ENCODE measurements at regions of chr3 and their contacts with region 1.

Region 1: DNA sequence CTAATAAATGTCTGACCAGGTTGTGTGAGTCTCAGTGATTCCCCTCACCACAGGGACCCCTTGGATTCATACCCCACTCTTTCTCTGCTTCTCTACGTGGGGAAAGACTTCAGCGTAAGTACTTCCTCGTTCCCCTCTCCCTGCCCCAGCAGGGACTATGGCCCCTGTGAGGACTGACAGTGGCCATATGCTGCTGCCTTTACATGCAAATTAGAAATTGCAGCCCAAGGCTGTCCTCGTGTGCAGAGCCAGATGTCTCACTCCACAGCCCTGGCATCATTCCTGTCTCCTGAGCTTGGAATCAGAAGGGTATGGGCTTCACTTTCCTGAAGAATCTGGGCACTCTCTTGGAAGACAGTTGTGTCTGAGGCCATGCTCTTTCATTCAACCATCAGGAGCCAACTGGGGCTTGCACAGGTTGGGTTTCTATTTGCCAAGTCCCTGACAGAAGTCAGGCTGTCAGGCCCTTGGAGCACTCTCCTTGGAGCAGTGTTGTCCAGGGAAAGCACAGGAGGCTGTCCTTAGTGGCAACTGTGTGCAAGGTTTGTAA is 30.5 kb upstream of the IQCF2 start:
- DNase-seq: no peak
- H3K4me3 ChIP-seq: no peak overlapping the region
- H3K27ac ChIP-seq: no peak overlapping the region
- H3K4me1 ChIP-seq: no peaks in the 10 kb centered on the region
- H3K27me3 ChIP-seq: no peaks in the 10 kb centered on the region
- CTCF ChIP-seq: no peak

Region 2: GRCh38 chr3:51471775-51472652 is 358.9 kb before region 1 on chr3:
- intact Hi-C with region 1: no loop called
- DNase-seq: no peak
- H3K4me3 ChIP-seq: no peak overlapping the region
- H3K27ac ChIP-seq: no peak overlapping the region
- H3K4me1 ChIP-seq: no peaks in the 10 kb centered on the region
- H3K27me3 ChIP-seq: no peaks in the 10 kb centered on the region
- CTCF ChIP-seq: no peak

Region 3: GRCh38 chr3:51896607-51897305 is 65.8 kb after region 1 on chr3:
- intact Hi-C with region 1: loop called (anchors 2 kb)
- DNase-seq: no peak
- H3K4me3 ChIP-seq: no peak overlapping the region
- H3K27ac ChIP-seq: no peak overlapping the region
- H3K4me1 ChIP-seq: no peaks in the 10 kb centered on the region
- H3K27me3 ChIP-seq: no peaks in the 10 kb centered on the region
- CTCF ChIP-seq: no peak

Region 4: GRCh38 chr3:52231502-52232293 is 400.8 kb after region 1 on chr3:
- intact Hi-C with region 1: no loop called
- DNase-seq: peak in 1 of 2 donors; percentile 52
- H3K4me3 ChIP-seq: no peak overlapping the region
- H3K27ac ChIP-seq: no peak overlapping the region
- H3K4me1 ChIP-seq: peaks cover 0 to 27% (median 16%) of the 10 kb centered on the region in 4 donors
- H3K27me3 ChIP-seq: no peaks in the 10 kb centered on the region
- CTCF ChIP-seq: peak; percentile 74 to 75